PC-9 (cell line): ENCODE measurements at regions of chr4 and their contacts with region 1.

Region 1: GRCh38 chr4:152310262-152310661 is 225.6 kb downstream of the FBXW7 start:
- DNase-seq: peak; percentile 74 to 86
- H3K4me3 ChIP-seq: no peak overlapping the region
- H3K27ac ChIP-seq: 0 out of 2 replicates have a peak overlapping the region, but pooled peaks have one; percentile 56
- H3K4me1 ChIP-seq: peaks cover 19% of the 10 kb centered on the region
- H3K27me3 ChIP-seq: no peaks in the 10 kb centered on the region
- CTCF ChIP-seq: no peak

Region 2: DNA sequence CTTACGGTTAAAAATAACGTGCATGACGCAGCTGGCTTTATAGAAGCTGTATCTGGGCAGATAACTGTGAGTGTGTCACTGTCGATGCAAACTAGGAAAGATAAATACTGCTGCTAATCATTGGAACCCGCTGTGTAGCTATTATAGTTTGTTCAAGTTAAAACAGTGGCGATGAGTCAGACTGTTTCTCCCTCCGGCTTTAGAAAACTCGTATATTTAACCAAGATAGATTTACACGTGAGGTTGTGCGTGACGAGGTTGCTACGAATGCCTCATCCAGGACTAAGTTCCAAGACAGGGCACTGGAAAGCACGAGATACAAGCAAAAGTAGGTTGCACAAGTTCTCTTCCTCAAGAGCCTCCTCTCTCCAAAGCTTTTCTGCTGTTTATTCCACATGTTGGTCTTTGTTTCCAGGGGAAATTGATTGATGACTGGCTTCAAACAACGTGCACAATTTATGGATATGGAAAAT is 45.1 kb before region 1 on chr4:
- CTCF ChIA-PET with region 1: no interaction called
- POLR2A ChIA-PET with region 1: no interaction called
- intact Hi-C with region 1: no loop called
- DNase-seq: peak in 1 of 2 experiments; percentile 66
- H3K4me3 ChIP-seq: no peak overlapping the region
- H3K27ac ChIP-seq: no peak overlapping the region
- H3K4me1 ChIP-seq: no peaks in the 10 kb centered on the region; the same call in 1 of the 2 replicates
- H3K27me3 ChIP-seq: no peaks in the 10 kb centered on the region
- CTCF ChIP-seq: no peak

Region 3: DNA sequence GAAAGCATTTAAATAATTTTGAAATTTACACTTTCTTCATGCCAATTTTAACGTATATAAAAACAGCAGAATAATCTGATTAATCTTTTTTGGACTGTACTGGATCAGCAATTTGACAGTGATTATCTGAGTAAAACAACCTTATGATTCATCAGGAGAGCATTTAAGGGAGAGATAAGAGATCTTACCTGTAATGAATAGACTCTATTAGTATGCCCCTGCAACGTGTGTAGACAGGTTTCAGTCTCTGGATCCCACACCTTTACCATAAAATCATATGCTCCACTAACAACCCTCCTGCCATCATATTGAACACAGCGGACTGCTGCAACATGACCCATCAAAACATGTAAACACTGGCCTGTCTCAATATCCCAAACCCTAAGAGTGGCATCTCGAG is 15.6 kb after region 1 on chr4:
- CTCF ChIA-PET with region 1: no interaction called
- POLR2A ChIA-PET with region 1: no interaction called
- intact Hi-C with region 1: loop called (anchors 1 kb)
- DNase-seq: peak; percentile 20 to 62
- H3K4me3 ChIP-seq: no peak overlapping the region
- H3K27ac ChIP-seq: no peak overlapping the region
- H3K4me1 ChIP-seq: peaks cover 26% of the 10 kb centered on the region
- H3K27me3 ChIP-seq: no peaks in the 10 kb centered on the region
- CTCF ChIP-seq: no peak

Region 4: GRCh38 chr4:152385551-152385950 is 75.3 kb after region 1 on chr4:
- CTCF ChIA-PET with region 1: no interaction called
- POLR2A ChIA-PET with region 1: no interaction called
- intact Hi-C with region 1: no loop called
- DNase-seq: no peak
- H3K4me3 ChIP-seq: no peak overlapping the region
- H3K27ac ChIP-seq: no peak overlapping the region
- H3K4me1 ChIP-seq: no peaks in the 10 kb centered on the region
- H3K27me3 ChIP-seq: no peaks in the 10 kb centered on the region
- CTCF ChIP-seq: peak; percentile 66; the same call in 1 of the 2 replicates